PC-9 (cell line): ENCODE measurements at regions of chr5 and their contacts with region 1.

Region 1: GRCh38 chr5:102755686-102756371 is 724 bp downstream of the PAM start:
- DNase-seq: peak; percentile 72 to 85
- H3K4me3 ChIP-seq: peak overlapping the region; percentile 86
- H3K27ac ChIP-seq: peak overlapping the region; percentile 77
- H3K4me1 ChIP-seq: peaks cover 15% of the 10 kb centered on the region; the same call in 1 of the 2 replicates
- H3K27me3 ChIP-seq: no peaks in the 10 kb centered on the region
- CTCF ChIP-seq: no peak

Region 2: DNA sequence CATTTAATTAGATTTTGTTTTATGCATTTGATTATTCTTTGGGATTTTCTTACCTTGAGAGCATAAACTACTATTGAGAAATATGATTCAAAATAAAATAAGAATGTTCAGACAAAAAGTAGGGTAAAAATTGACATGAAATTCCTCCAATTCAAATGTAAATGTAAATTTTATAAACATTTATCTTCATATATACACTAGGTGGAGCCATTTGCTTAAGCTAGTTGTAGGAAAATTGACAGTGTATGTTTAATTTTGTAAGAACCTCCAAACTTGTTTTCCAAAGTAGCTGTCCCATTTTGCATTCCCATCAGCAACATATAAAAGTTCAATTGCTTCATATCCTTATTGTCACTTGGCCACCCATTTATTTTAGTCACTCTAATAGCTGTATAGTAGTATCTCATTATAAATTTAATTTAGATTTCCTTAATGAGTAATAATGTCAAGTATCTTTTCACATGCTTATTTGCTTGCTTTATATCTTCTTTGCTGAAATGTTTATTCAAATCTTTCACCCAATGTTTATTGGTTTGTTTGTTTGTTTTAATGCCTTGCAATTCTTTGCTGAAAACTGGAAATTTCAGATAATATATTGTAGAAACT is 219.4 kb before region 1 on chr5:
- CTCF ChIA-PET with region 1: no interaction called
- POLR2A ChIA-PET with region 1: no interaction called
- intact Hi-C with region 1: no loop called
- DNase-seq: no peak
- H3K4me3 ChIP-seq: no peak overlapping the region
- H3K27ac ChIP-seq: no peak overlapping the region
- H3K4me1 ChIP-seq: no peaks in the 10 kb centered on the region
- H3K27me3 ChIP-seq: no peaks in the 10 kb centered on the region
- CTCF ChIP-seq: peak; percentile 70

Region 3: DNA sequence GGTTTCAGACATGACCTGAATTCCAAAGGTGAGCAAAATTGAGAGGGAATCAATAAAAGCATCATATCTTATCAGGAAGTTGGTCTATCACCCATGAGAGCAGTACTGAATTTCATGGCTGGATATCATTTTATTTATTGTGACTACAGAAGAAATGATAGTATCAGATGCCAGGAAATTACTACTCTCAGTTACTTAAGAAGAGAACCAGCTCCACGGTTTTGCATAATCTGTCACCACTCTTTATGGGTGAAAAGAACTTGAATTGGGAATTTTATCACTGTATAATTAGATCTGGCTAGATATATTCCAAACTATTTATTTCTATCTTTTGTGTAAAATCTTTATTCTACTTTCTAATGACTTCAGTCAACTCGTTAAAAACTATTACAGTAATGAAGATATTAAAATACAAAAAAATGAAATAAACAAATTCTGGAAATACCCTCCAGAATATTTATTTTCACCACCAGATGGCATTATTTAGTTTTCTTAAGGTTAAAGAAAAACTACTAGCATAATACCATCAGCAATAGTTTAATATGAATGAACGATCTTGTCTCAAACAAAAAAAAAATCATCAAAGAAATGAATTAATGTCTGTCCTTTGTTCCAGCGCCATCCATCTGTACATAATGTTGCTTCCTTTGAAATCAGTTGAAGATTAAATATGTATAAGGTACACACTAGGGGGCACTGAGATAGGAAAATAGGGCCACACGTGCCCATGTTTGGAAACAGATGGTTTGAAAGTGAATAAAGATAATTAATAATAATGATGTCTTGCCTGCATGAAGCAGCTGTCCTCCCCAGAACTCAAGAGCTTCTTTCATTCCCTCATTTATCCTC is 172.3 kb before region 1 on chr5:
- CTCF ChIA-PET with region 1: no interaction called
- POLR2A ChIA-PET with region 1: no interaction called
- intact Hi-C with region 1: loop called (anchors 5 kb)
- DNase-seq: no peak
- H3K4me3 ChIP-seq: no peak overlapping the region
- H3K27ac ChIP-seq: no peak overlapping the region
- H3K4me1 ChIP-seq: no peaks in the 10 kb centered on the region
- H3K27me3 ChIP-seq: no peaks in the 10 kb centered on the region
- CTCF ChIP-seq: peak; percentile 74

Region 4: DNA sequence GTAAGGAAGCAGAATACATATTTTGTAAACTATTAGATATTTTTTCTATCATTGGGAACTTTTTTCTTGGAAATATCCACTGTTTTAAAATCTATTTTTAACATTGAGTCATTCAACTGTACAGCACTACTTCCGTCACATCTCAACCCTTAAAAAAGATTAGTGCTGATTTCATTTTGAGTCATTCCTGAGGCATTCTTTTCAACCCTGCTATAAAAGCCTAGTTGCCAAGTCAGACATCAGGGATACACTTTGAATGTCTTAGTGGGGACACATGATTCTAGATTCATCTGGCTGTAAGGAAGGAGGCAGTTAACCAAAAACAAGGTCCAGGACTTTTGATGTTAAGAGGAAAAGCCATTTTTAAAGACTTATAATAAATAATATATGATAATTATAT is 203.2 kb after region 1 on chr5:
- CTCF ChIA-PET with region 1: no interaction called
- POLR2A ChIA-PET with region 1: no interaction called
- intact Hi-C with region 1: loop called (anchors 5 kb)
- DNase-seq: peak; percentile 2 to 64
- H3K4me3 ChIP-seq: no peak overlapping the region
- H3K27ac ChIP-seq: peak overlapping the region; percentile 77
- H3K4me1 ChIP-seq: peaks cover 18% of the 10 kb centered on the region
- H3K27me3 ChIP-seq: no peaks in the 10 kb centered on the region
- CTCF ChIP-seq: no peak

Region 5: DNA sequence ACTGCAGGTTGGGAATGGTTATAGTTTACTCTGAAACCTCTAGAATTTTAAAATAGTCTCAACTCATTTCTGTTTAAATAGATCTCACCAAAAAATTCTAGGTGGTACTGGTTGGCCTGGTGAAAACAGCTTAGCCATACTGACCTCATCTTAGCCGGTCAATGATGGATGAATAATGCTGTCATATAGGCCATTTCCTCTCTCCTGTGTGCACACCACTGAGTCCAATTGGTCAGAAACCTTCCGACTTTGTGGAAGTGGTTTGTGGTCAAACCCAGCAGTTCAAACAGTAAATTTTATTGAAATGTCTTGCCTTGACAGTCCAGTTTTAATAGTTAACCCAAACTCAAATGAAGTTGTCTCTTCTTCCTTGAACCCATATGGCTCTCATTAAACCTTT is 265.5 kb after region 1 on chr5:
- CTCF ChIA-PET with region 1: no interaction called
- POLR2A ChIA-PET with region 1: no interaction called
- intact Hi-C with region 1: no loop called
- DNase-seq: no peak
- H3K4me3 ChIP-seq: no peak overlapping the region
- H3K27ac ChIP-seq: no peak overlapping the region
- H3K4me1 ChIP-seq: no peaks in the 10 kb centered on the region
- H3K27me3 ChIP-seq: no peaks in the 10 kb centered on the region
- CTCF ChIP-seq: no peak